ENCODE measurements at regions of chr6 and their contacts with region 1.

Region 1: DNA sequence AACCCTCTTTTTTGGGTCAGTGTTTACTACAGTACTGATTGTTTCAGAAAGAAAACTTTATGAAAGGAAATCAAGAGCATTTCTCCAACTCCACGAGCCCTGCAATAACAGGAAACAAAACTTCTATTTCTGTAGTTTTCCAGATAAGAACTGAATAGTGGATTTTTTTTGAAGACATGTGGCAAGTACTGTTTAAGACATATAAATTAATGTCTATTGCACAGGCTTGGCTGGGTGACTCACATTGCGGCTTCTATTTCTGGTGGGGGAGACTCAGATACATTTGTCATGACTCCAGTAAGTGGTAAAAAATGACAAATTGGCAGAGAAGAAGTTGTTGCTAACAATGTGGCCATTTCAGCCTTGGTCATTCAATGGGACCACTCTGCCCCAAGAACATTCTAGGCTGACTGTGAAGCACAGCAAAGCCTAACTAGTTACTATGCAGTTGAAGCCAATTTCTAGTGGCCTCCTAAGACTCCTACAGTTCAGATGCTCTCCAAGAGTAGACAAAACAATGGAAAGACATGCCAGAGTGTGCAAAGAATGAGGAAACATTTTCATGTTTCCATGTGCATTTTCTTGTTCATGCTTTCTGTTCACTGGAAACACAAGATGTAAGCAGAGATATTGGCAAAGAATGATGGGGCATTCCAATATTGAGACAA is 200.9 kb downstream of the EDN1 start:
- DNase-seq: peak; percentile 94
- ATAC-seq: peak; percentile 72
- H3K4me3 ChIP-seq: no peak overlapping the region
- H3K27ac ChIP-seq: peak overlapping the region; percentile 84
- H3K4me1 ChIP-seq: peaks cover 33% of the 10 kb centered on the region
- H3K27me3 ChIP-seq: no peaks in the 10 kb centered on the region
- CTCF ChIP-seq: no peak

Region 2: GRCh38 chr6:11770546-11771466 is 720.2 kb before region 1 on chr6:
- CTCF ChIA-PET with region 1: no interaction called
- POLR2A ChIA-PET with region 1: no interaction called
- intact Hi-C with region 1: loop called (anchors 5 kb)
- DNase-seq: peak; percentile 98
- ATAC-seq: peak; percentile 83
- H3K4me3 ChIP-seq: peak overlapping the region; percentile 29; the same call in 1 of the 2 replicates
- H3K27ac ChIP-seq: peak overlapping the region; percentile 97
- H3K4me1 ChIP-seq: peaks cover 71% of the 10 kb centered on the region
- H3K27me3 ChIP-seq: no peaks in the 10 kb centered on the region
- CTCF ChIP-seq: no peak

Region 3: DNA sequence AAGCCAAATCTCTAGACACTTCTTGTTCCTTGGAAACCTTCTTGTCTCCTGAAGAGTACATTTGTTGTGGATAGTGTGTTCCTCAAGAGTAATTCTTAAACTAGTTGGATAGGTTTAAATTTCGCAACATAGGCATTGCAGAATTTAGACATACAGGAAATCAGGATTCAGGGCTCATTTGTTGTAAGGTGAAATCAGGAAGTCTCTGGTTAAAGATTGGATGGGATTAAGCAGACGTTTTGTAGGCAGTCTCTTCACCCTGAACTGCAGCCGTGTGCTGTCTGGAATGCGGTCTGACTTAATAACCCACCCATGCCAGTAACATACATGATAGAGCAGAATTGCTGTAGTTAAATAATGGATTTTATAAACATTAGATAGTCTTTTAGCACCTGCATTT is 457.3 kb before region 1 on chr6:
- CTCF ChIA-PET with region 1: no interaction called
- POLR2A ChIA-PET with region 1: no interaction called
- intact Hi-C with region 1: no loop called
- DNase-seq: peak; percentile 69
- ATAC-seq: no peak
- H3K4me3 ChIP-seq: no peak overlapping the region
- H3K27ac ChIP-seq: no peak overlapping the region
- H3K4me1 ChIP-seq: peaks cover 6% of the 10 kb centered on the region; the same call in 1 of the 2 replicates
- H3K27me3 ChIP-seq: no peaks in the 10 kb centered on the region
- CTCF ChIP-seq: no peak

Region 4: DNA sequence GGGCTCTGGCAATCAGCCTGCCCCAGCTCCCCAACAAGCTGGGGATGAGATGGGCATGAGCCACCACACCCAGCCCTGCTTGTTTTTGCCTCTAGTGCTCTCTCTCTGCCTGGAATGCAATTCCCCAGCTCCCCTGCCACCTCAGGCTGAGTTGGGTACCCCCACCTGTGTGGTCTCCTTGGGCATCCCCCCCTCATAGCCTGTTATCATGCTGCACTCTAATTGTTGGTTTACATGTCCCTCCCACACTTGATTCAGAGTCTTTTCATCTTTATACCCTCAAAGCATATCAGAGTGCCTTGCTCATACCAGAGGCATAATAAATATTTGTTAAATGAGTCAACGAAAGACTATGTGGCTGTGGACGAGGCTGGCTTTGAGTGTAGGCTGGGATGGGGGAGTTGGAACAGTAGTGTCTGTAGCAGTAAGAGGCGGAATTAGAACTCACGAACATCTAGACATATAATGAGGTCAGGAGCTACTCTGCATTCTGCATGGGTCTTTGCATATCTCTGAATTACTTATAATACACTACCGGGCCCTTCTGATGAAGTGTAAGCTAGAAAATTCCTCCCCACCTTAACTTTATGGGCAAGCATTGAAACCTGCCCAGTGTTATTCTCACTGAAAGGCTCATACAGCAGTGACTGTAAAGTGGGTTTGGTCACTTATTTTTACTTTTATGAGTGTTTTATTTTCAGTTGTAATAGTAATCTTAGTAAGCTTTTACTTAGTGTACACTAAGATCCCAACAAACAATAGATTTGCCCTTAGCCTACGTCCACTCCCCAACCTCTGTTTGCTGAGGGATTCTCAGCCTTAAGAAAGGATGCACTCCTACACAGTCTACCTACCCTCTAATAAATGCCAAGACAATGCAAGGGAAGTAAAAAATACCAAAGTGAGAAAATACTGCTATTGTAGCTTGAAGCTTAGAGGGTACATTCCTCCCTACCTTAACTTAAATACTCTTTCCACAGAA is 142.2 kb before region 1 on chr6:
- CTCF ChIA-PET with region 1: no interaction called
- POLR2A ChIA-PET with region 1: no interaction called
- intact Hi-C with region 1: loop called (anchors 2 kb)
- DNase-seq: peak; percentile 96
- ATAC-seq: peak; percentile 97
- H3K4me3 ChIP-seq: peak overlapping the region; percentile 10; the same call in 1 of the 2 replicates
- H3K27ac ChIP-seq: peak overlapping the region; percentile 85
- H3K4me1 ChIP-seq: peaks cover 38% of the 10 kb centered on the region
- H3K27me3 ChIP-seq: no peaks in the 10 kb centered on the region
- CTCF ChIP-seq: no peak

Region 5: GRCh38 chr6:12419631-12420272 is 71.3 kb before region 1 on chr6:
- CTCF ChIA-PET with region 1: no interaction called
- POLR2A ChIA-PET with region 1: no interaction called
- intact Hi-C with region 1: loop called (anchors 5 kb)
- DNase-seq: no peak
- ATAC-seq: peak; percentile 14; the same call in 1 of the 2 replicates
- H3K4me3 ChIP-seq: no peak overlapping the region
- H3K27ac ChIP-seq: peak overlapping the region; percentile 58
- H3K4me1 ChIP-seq: peaks cover 32% of the 10 kb centered on the region
- H3K27me3 ChIP-seq: no peaks in the 10 kb centered on the region
- CTCF ChIP-seq: no peak

Measured in PC-3 (cell line).